ENCODE measurements at regions of chr5 and their contacts with region 1.

Region 1: GRCh38 chr5:143182901-143183820 is 220.3 kb downstream of the NR3C1 start:
- DNase-seq: peak; percentile 84
- ATAC-seq: peak; percentile 79
- H3K4me3 Mint-ChIP-seq: peak overlapping the region; percentile 9
- H3K27ac Mint-ChIP-seq: peak overlapping the region; percentile 79
- H3K4me1 Mint-ChIP-seq: peaks cover 47% of the 10 kb centered on the region
- H3K27me3 Mint-ChIP-seq: no peaks in the 10 kb centered on the region

Region 2: GRCh38 chr5:143023411-143024096 is 159.6 kb before region 1 on chr5:
- CTCF ChIA-PET with region 1: no interaction called
- POLR2A ChIA-PET with region 1: no interaction called
- intact Hi-C with region 1: loop called (anchors 5 kb)
- DNase-seq: peak; percentile 77
- ATAC-seq: peak; percentile 88
- H3K4me3 Mint-ChIP-seq: no peak overlapping the region
- H3K27ac Mint-ChIP-seq: peak overlapping the region; percentile 1
- H3K4me1 Mint-ChIP-seq: peaks cover 48% of the 10 kb centered on the region
- H3K27me3 Mint-ChIP-seq: no peaks in the 10 kb centered on the region

Region 3: GRCh38 chr5:143134900-143135299 is 48.3 kb before region 1 on chr5:
- CTCF ChIA-PET with region 1: no interaction called
- POLR2A ChIA-PET with region 1: no interaction called
- intact Hi-C with region 1: no loop called
- DNase-seq: no peak
- ATAC-seq: peak; percentile 60
- H3K4me3 Mint-ChIP-seq: no peak overlapping the region
- H3K27ac Mint-ChIP-seq: no peak overlapping the region
- H3K4me1 Mint-ChIP-seq: no peaks in the 10 kb centered on the region
- H3K27me3 Mint-ChIP-seq: no peaks in the 10 kb centered on the region

Region 4: DNA sequence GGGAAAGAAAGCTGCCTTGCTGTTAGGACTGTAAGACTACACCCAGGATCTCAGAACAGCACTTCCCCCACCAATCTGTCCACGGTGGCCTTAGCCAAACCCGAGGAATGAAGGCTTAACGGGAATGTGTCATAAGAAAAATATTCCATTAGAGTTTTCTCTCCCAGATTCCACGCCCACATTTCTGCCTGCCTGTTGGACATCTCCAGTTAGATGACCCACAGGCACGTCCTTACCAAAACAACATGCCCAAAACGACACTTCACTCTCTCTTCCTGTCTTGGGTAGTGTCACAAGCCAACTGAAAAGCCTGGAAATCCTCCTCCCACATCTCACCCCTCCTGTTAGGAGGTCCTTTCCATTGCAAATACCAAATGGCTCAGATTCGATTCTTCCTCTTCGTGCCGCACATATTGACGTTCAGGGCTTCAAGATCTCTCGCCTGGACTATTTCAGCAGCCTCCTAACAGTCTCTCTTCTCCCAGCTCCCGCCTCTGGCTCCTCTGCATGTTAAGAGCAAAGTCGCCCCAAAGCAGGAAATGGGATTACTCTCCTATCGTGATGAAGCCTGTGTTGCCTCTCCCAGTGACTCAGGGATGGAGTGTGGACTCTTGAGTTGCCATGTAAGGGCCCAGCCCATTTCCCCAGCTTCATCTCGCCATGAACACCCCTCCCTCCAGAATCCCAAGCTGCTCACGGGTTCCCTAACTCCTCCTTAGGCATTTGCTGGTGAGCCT is 61.0 kb after region 1 on chr5:
- CTCF ChIA-PET with region 1: no interaction called
- POLR2A ChIA-PET with region 1: no interaction called
- intact Hi-C with region 1: no loop called
- DNase-seq: no peak
- ATAC-seq: no peak
- H3K4me3 Mint-ChIP-seq: no peak overlapping the region
- H3K27ac Mint-ChIP-seq: no peak overlapping the region
- H3K4me1 Mint-ChIP-seq: no peaks in the 10 kb centered on the region
- H3K27me3 Mint-ChIP-seq: no peaks in the 10 kb centered on the region